Panc1 (cell line): ENCODE measurements at regions of chr13 and their contacts with region 1.

Region 1: GRCh38 chr13:75549262-75550158 is at the start of gene UCHL3:
- DNase-seq: peak; percentile 74
- ATAC-seq: peak; percentile 99
- H3K4me3 ChIP-seq: peak within 1 kb of the TSS; percentile 63 to 88
- H3K27ac ChIP-seq: peak within 1 kb of the TSS; percentile 86
- H3K4me1 ChIP-seq: peaks cover 3% of the 10 kb centered on the region; the same call in 1 of the 2 replicates
- H3K27me3 ChIP-seq: no peaks in the 10 kb centered on the region
- CTCF ChIP-seq: peak; percentile 84
- total RNA-seq, gene UCHL3: 29.3 TPM

Region 2: DNA sequence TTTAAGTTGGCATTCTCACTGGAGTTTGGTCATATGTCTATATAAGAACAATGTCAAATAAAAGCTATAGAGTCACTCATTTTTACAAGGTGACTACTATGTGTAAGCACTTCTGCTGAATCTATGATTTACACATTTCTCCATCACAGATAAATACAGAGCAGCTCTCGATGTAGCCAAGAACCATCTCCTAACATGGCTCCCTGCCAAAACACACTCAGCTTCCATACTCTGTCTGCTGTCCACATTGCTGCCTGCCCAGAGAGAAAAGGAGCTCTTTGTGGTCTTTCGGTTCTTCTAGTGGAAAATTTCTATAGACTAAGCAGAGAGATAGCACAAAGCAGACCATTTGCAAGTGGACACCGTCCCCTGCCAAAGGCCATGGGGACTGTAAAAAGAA is 1224.4 kb before region 1 on chr13:
- CTCF ChIA-PET with region 1: no interaction called
- POLR2A ChIA-PET with region 1: no interaction called
- in situ Hi-C with region 1: no loop called
- intact Hi-C with region 1: no loop called
- DNase-seq: no peak
- ATAC-seq: 0 out of 2 replicates have a peak, but pooled peaks have one; percentile 26
- H3K4me3 ChIP-seq: no peak overlapping the region
- H3K27ac ChIP-seq: no peak overlapping the region
- H3K4me1 ChIP-seq: no peaks in the 10 kb centered on the region
- H3K27me3 ChIP-seq: no peaks in the 10 kb centered on the region
- CTCF ChIP-seq: no peak

Region 3: DNA sequence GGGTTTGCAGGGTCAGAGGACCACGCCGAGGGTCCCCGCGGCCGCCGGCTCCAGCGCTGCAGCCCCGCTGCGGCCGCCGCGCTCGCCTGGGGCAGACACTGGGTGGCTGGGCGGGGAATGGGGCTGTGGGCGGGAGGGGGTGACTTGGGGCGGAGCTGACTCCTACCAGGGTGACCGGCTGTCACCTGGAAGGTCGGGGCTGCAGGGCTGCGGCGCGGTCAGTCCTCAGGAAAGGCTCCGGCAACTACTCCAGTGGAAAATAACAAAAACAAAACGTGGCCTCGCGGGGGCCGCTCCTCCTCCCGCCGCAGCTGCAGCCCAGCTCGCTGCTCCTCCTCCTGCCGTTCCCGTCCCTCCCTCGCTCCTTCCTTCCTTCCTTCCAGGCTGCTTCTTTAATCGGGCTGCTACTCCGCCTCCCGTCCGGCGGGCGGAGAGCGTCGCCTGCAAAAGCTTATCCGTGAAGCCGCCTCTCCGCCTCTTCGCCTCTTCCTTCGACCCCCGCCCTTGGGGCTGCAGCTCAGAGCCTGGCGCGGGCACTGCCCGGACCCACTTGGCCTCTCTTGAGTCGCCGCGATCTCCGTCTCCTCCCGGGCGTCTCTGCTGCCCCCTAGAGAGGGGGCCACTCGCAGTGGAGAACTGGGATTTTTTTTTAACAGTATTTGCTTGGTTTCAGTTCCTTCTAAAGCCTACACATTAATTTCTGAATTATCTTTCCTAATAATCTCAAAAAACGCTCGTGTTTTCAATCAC is 67.3 kb before region 1 on chr13 and contains the start of gene TBC1D4:
- CTCF ChIA-PET with region 1: no interaction called
- POLR2A ChIA-PET with region 1: no interaction called
- in situ Hi-C with region 1: no loop called
- intact Hi-C with region 1: loop called (anchors 10 kb)
- DNase-seq: peak; percentile 52
- ATAC-seq: peak; percentile 91
- H3K4me3 ChIP-seq: peak within 1 kb of the TSS; percentile 54 to 66
- H3K27ac ChIP-seq: peak within 1 kb of the TSS; percentile 54
- H3K4me1 ChIP-seq: no peaks in the 10 kb centered on the region
- H3K27me3 ChIP-seq: no peaks in the 10 kb centered on the region
- CTCF ChIP-seq: peak; percentile 89
- total RNA-seq, gene TBC1D4: 5.5 TPM

Region 4: DNA sequence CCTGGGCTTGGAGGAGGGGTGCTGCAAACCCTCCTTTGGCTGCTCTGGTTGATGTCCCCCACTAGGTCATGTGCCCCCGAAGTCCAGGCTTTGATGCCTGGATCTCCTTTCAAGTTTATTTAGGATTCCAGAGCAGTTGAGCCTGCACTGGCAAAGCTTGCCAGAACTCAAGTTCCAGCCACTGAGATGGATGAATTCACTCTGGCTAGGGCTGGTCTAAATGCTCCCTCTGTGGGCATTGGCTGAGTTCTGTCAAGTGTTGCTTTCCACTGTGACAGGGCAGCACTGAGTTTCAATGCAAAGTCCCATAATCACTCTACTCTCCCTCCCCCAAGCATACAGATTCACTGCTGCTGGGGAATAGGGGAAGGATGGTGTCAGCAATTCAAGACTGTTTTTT is 68.8 kb after region 1 on chr13:
- CTCF ChIA-PET with region 1: interaction called, 15 read pairs
- POLR2A ChIA-PET with region 1: no interaction called
- in situ Hi-C with region 1: no loop called
- intact Hi-C with region 1: no loop called
- DNase-seq: no peak
- ATAC-seq: no peak
- H3K4me3 ChIP-seq: no peak overlapping the region
- H3K27ac ChIP-seq: no peak overlapping the region
- H3K4me1 ChIP-seq: no peaks in the 10 kb centered on the region
- H3K27me3 ChIP-seq: no peaks in the 10 kb centered on the region
- CTCF ChIP-seq: no peak